ENCODE measurements at regions of chrX and their contacts with region 1.

Region 1: GRCh38 chrX:78957768-78958130 is 12.6 kb downstream of the P2RY10 start:
- DNase-seq: peak; percentile 93
- ATAC-seq: peak; percentile 84
- H3K4me3 ChIP-seq: peak overlapping the region; percentile 49; the same call in 1 of the 2 replicates
- H3K27ac ChIP-seq: peak overlapping the region; percentile 86
- H3K4me1 ChIP-seq: peaks cover 28% of the 10 kb centered on the region
- H3K27me3 ChIP-seq: no peaks in the 10 kb centered on the region
- CTCF ChIP-seq: no peak
- EP300 ChIP-seq: peak; percentile 72 to 97; a peak in 3 of 4 replicates
- POLR2A ChIP-seq: no peak
- RAD21 ChIP-seq: no peak

Region 2: GRCh38 chrX:78321809-78322208 is 635.9 kb before region 1 on chrX:
- CTCF ChIA-PET with region 1: no interaction called
- POLR2A ChIA-PET with region 1: no interaction called
- RAD21 ChIA-PET with region 1: no interaction called
- SMC1A ChIA-PET with region 1: no interaction called
- in situ Hi-C with region 1: no loop called
- intact Hi-C with region 1: loop called (anchors 10 kb)
- DNase-seq: no peak
- ATAC-seq: peak; percentile 92
- H3K4me3 ChIP-seq: no peak overlapping the region
- H3K27ac ChIP-seq: no peak overlapping the region
- H3K4me1 ChIP-seq: peaks cover 4% of the 10 kb centered on the region
- H3K27me3 ChIP-seq: no peaks in the 10 kb centered on the region
- CTCF ChIP-seq: no peak
- EP300 ChIP-seq: no peak
- POLR2A ChIP-seq: no peak
- RAD21 ChIP-seq: no peak

Region 3: DNA sequence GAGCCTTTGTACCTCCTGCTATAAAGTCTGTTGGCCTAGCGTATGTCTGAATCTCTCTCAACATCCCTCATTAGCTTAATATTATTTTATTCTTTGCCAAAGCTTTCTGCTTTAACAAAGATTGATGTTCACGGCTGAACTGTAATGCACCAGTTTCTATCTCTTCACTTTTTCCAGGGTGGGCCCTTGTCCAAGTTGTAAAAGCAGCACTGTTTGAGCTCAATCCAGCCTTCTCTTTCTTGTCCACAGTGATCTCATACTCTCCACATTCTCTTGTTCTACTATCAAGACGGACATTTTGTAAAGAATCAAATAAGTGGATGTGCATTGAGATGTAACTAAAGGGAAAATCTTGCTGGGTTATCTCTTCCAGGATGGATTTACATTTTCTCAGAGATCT is 264.2 kb before region 1 on chrX:
- CTCF ChIA-PET with region 1: no interaction called
- POLR2A ChIA-PET with region 1: no interaction called
- RAD21 ChIA-PET with region 1: no interaction called
- SMC1A ChIA-PET with region 1: no interaction called
- in situ Hi-C with region 1: no loop called
- intact Hi-C with region 1: no loop called
- DNase-seq: no peak
- ATAC-seq: no peak
- H3K4me3 ChIP-seq: no peak overlapping the region
- H3K27ac ChIP-seq: no peak overlapping the region
- H3K4me1 ChIP-seq: no peaks in the 10 kb centered on the region
- H3K27me3 ChIP-seq: no peaks in the 10 kb centered on the region
- CTCF ChIP-seq: no peak
- EP300 ChIP-seq: no peak
- POLR2A ChIP-seq: no peak
- RAD21 ChIP-seq: no peak

Region 4: DNA sequence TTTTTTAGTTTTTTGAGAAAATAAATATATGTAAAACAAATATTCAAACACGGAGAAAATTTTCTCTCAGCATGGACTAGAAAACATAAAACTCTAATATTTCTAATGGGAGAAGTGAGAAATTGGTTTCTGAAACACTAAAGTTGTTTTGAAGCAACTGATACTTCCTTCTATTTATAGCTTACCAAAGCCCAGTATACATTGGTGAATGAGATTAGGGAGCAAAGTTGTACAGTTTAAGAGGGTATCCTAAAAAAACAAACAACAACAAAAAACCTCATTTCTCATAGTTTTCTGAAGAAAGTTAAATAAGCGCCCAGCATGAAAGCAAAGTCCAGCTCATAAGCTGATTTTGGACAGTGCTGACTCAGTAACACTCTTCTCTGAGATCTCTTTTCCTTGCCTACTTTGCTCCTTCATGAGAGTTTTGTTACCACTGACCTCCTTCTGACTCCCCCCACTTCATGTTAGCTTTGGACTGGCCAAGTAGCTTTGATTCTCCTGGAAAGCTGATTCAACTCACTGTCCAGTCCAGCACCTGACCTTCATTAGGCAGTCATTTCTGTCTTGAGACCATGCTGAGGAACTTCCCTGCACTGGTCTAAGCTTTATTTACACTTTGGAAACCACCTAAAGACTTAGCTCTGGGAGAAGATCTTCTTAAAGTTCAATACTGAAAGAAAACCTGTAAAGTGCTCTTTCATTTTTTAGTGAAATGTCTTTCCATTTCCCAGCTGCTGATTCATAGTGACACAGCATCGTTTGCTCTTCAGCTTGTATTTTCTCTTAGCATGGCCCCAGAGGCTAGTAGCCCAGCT is 34.3 kb before region 1 on chrX:
- CTCF ChIA-PET with region 1: interaction called, 14 read pairs
- POLR2A ChIA-PET with region 1: interaction called, 6 read pairs
- RAD21 ChIA-PET with region 1: interaction called, 121 read pairs
- SMC1A ChIA-PET with region 1: interaction called, 30 read pairs
- in situ Hi-C with region 1: no loop called
- intact Hi-C with region 1: no loop called
- DNase-seq: peak; percentile 87
- ATAC-seq: peak; percentile 95
- H3K4me3 ChIP-seq: peak overlapping the region; percentile 49
- H3K27ac ChIP-seq: peak overlapping the region; percentile 99
- H3K4me1 ChIP-seq: peaks cover 9% of the 10 kb centered on the region
- H3K27me3 ChIP-seq: no peaks in the 10 kb centered on the region
- CTCF ChIP-seq: no peak
- EP300 ChIP-seq: peak; percentile 68 to 72; a peak in 2 of 4 replicates
- POLR2A ChIP-seq: no peak; the same call in 1 of the 2 replicates
- RAD21 ChIP-seq: 0 out of 2 replicates have a peak, but pooled peaks have one; percentile 3

Region 5: GRCh38 chrX:78979789-78980464 is 22.2 kb after region 1 on chrX:
- CTCF ChIA-PET with region 1: no interaction called
- POLR2A ChIA-PET with region 1: interaction called, 3 read pairs
- RAD21 ChIA-PET with region 1: interaction called, 10 read pairs
- SMC1A ChIA-PET with region 1: interaction called, 7 read pairs
- in situ Hi-C with region 1: no loop called
- intact Hi-C with region 1: no loop called
- DNase-seq: peak; percentile 84
- ATAC-seq: peak; percentile 98
- H3K4me3 ChIP-seq: peak overlapping the region; percentile 37; the same call in 1 of the 2 replicates
- H3K27ac ChIP-seq: peak overlapping the region; percentile 76
- H3K4me1 ChIP-seq: peaks cover 14% of the 10 kb centered on the region; the same call in 1 of the 2 replicates
- H3K27me3 ChIP-seq: no peaks in the 10 kb centered on the region
- CTCF ChIP-seq: no peak
- EP300 ChIP-seq: peak; percentile 68 to 86; a peak in 3 of 4 replicates
- POLR2A ChIP-seq: no peak
- RAD21 ChIP-seq: no peak

Region 6: GRCh38 chrX:79366873-79367749 is 409.4 kb after region 1 on chrX and contains the start of gene ITM2A:
- CTCF ChIA-PET with region 1: no interaction called
- POLR2A ChIA-PET with region 1: no interaction called
- RAD21 ChIA-PET with region 1: no interaction called
- SMC1A ChIA-PET with region 1: no interaction called
- in situ Hi-C with region 1: no loop called
- intact Hi-C with region 1: loop called (anchors 10 kb)
- DNase-seq: no peak
- ATAC-seq: peak; percentile 82
- H3K4me3 ChIP-seq: peak within 1 kb of the TSS; percentile 72
- H3K27ac ChIP-seq: peak within 1 kb of the TSS; percentile 52
- H3K4me1 ChIP-seq: no peaks in the 10 kb centered on the region; the same call in 1 of the 2 replicates
- H3K27me3 ChIP-seq: no peaks in the 10 kb centered on the region
- CTCF ChIP-seq: peak in 1 of 3 experiments; percentile 26; a peak in 1 of 6 replicates
- EP300 ChIP-seq: no peak
- POLR2A ChIP-seq: peak; percentile 59
- RAD21 ChIP-seq: no peak
- polyA plus RNA-seq, gene ITM2A: 74.4 to 89.7 TPM

Region 7: DNA sequence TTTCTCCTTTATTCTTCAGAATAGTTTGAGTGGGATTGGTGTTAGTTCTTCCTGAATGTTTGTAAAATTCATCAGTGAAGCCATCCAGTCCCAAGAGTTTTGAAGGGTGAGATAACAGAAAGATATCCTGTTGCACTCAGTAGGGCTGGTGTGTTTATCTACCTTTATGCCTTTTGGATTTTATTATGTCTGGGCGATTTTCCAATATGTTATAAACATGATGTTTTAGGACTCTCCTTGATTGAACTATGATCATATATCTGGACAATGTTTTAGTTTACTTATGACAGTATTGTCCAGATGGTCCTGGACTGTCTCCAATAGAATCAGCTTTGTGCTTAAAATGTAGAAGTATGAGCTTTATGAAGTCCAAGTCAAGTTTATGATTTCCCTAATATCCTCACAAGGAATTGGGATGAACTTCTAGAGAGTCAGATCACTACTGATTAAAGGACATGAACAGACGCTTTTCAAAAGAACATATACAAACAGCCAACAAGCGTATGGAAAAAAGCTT is 487.0 kb after region 1 on chrX:
- CTCF ChIA-PET with region 1: no interaction called
- POLR2A ChIA-PET with region 1: no interaction called
- RAD21 ChIA-PET with region 1: no interaction called
- SMC1A ChIA-PET with region 1: no interaction called
- in situ Hi-C with region 1: no loop called
- intact Hi-C with region 1: loop called (anchors 10 kb)
- DNase-seq: no peak
- ATAC-seq: no peak
- H3K4me3 ChIP-seq: no peak overlapping the region
- H3K27ac ChIP-seq: no peak overlapping the region
- H3K4me1 ChIP-seq: no peaks in the 10 kb centered on the region
- H3K27me3 ChIP-seq: no peaks in the 10 kb centered on the region
- CTCF ChIP-seq: no peak
- EP300 ChIP-seq: no peak
- POLR2A ChIP-seq: no peak
- RAD21 ChIP-seq: no peak